A549 (cell line): ENCODE measurements at regions of chr5 and their contacts with region 1.

Region 1: DNA sequence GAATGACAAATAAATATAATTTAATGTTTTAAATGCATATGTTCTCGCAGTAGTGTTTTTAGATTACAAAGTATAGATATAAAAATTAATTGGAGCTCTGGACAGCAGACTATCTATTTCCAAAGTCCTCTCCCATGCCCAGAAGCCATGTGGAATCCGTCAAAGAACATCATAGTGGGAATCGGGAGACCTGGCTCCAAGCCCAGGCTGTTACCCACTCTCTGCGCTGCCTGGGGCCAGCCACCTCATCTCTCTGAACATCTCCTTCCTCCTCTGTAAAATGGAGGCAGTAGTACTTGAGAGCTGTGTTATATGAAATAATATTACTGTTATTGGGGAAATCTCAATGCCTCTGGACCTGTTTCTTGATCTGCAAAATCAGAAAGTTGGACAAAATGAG is 58.1 kb upstream of the SLC30A5 start:
- DNase-seq: no peak
- ATAC-seq: no peak
- H3K4me3 ChIP-seq: no peak overlapping the region
- H3K27ac ChIP-seq: no peak overlapping the region
- H3K4me1 ChIP-seq: peaks cover 3% of the 10 kb centered on the region; the same call in 1 of the 3 replicates
- CTCF ChIP-seq: no peak
- EP300 ChIP-seq: no peak
- POLR2A ChIP-seq: no peak
- RAD21 ChIP-seq: no peak

Region 2: GRCh38 chr5:69024241-69024651 is 11.4 kb before region 1 on chr5:
- CTCF ChIA-PET with region 1: interaction called, 26 read pairs
- POLR2A ChIA-PET with region 1: no interaction called
- DNase-seq: peak; percentile 39 to 69
- ATAC-seq: peak; percentile 62 to 88; a peak in 5 of 6 replicates
- H3K4me3 ChIP-seq: no peak overlapping the region
- H3K27ac ChIP-seq: no peak overlapping the region
- H3K4me1 ChIP-seq: no peaks in the 10 kb centered on the region
- CTCF ChIP-seq: peak; percentile 67
- EP300 ChIP-seq: no peak
- POLR2A ChIP-seq: no peak
- RAD21 ChIP-seq: peak; percentile 73 to 77